ENCODE measurements at regions of chr17 and their contacts with region 1.

Region 1: GRCh38 chr17:2029911-2030778 is at the start of gene DPH1:
- DNase-seq: peak; percentile 66 to 92 (median 85)
- ATAC-seq: peak; percentile 81
- H3K4me3 ChIP-seq: peak within 1 kb of the TSS; percentile 93 to 100
- H3K4me3 Mint-ChIP-seq: peak within 1 kb of the TSS; percentile 97
- H3K27ac ChIP-seq: peak within 1 kb of the TSS; percentile 73 to 81
- H3K27ac Mint-ChIP-seq: peak within 1 kb of the TSS; percentile 86
- H3K4me1 ChIP-seq: peaks cover 34% of the 10 kb centered on the region
- H3K4me1 Mint-ChIP-seq: peaks cover 34% of the 10 kb centered on the region
- H3K27me3 ChIP-seq: peaks cover 0 to 18% of the 10 kb centered on the region in 2 experiments
- H3K27me3 Mint-ChIP-seq: peaks cover 12% of the 10 kb centered on the region
- CTCF ChIP-seq: no peak
- total RNA-seq, gene DPH1: 128 to 149 TPM

Region 2: GRCh38 chr17:1829592-1830257 is 200.4 kb before region 1 on chr17 and contains the starts of genes RPA1 and SMYD4:
- CTCF ChIA-PET with region 1: no interaction called
- POLR2A ChIA-PET with region 1: no interaction called
- intact Hi-C with region 1: loop called in 1 of 2 experiments (anchors 5 kb)
- DNase-seq: peak; percentile 74 to 95 (median 86)
- ATAC-seq: peak; percentile 96
- H3K4me3 ChIP-seq: peak within 1 kb of the TSS; percentile 81 to 82
- H3K4me3 Mint-ChIP-seq: peak within 1 kb of the TSS; percentile 94
- H3K27ac ChIP-seq: peak within 1 kb of the TSS; percentile 74 to 77
- H3K27ac Mint-ChIP-seq: peak within 1 kb of the TSS; percentile 92
- H3K4me1 ChIP-seq: peaks cover 24% of the 10 kb centered on the region
- H3K4me1 Mint-ChIP-seq: peaks cover 59% of the 10 kb centered on the region
- H3K27me3 ChIP-seq: no peaks in the 10 kb centered on the region
- H3K27me3 Mint-ChIP-seq: no peaks in the 10 kb centered on the region
- CTCF ChIP-seq: no peak
- total RNA-seq, gene RPA1: 35.1 to 38.1 TPM
- total RNA-seq, gene SMYD4: 8.9 to 10.1 TPM

Region 3: GRCh38 chr17:1882836-1883235 is 147.3 kb before region 1 on chr17:
- CTCF ChIA-PET with region 1: interaction called, 8 read pairs
- POLR2A ChIA-PET with region 1: no interaction called
- intact Hi-C with region 1: loop called in 1 of 2 experiments (anchors 1 kb)
- DNase-seq: peak in 5 of 9 experiments; percentile 4 to 60 (median 41)
- ATAC-seq: peak; percentile 42
- H3K4me3 ChIP-seq: no peak overlapping the region
- H3K4me3 Mint-ChIP-seq: no peak overlapping the region
- H3K27ac ChIP-seq: no peak overlapping the region
- H3K27ac Mint-ChIP-seq: no peak overlapping the region
- H3K4me1 ChIP-seq: no peaks in the 10 kb centered on the region
- H3K4me1 Mint-ChIP-seq: no peaks in the 10 kb centered on the region
- H3K27me3 ChIP-seq: no peaks in the 10 kb centered on the region
- H3K27me3 Mint-ChIP-seq: no peaks in the 10 kb centered on the region
- CTCF ChIP-seq: peak; percentile 33

Region 4: GRCh38 chr17:2041561-2042366 is 11.6 kb after region 1 on chr17 and contains the start of gene OVCA2:
- CTCF ChIA-PET with region 1: interaction called, 7 read pairs
- POLR2A ChIA-PET with region 1: interaction called, 10 read pairs
- intact Hi-C with region 1: loop called (anchors 1 kb)
- DNase-seq: peak; percentile 96 to 99 (median 97)
- ATAC-seq: peak; percentile 94
- H3K4me3 ChIP-seq: peak within 1 kb of the TSS; percentile 74 to 75
- H3K4me3 Mint-ChIP-seq: peak within 1 kb of the TSS; percentile 85
- H3K27ac ChIP-seq: peak within 1 kb of the TSS; percentile 77 to 89
- H3K27ac Mint-ChIP-seq: peak within 1 kb of the TSS; percentile 92
- H3K4me1 ChIP-seq: peaks cover 15% of the 10 kb centered on the region
- H3K4me1 Mint-ChIP-seq: peaks cover 20% of the 10 kb centered on the region
- H3K27me3 ChIP-seq: no peaks in the 10 kb centered on the region
- H3K27me3 Mint-ChIP-seq: no peaks in the 10 kb centered on the region
- CTCF ChIP-seq: peak; percentile 42
- total RNA-seq, gene OVCA2: 38.7 to 48.2 TPM